Aorta (tissue), 5 donors: ENCODE measurements at regions of chr13 and their contacts with region 1.

Region 1: GRCh38 chr13:44969551-44970484 is 19.5 kb downstream of the NUFIP1 start:
- DNase-seq: no peak
- ATAC-seq: peak; percentile 73
- H3K4me3 ChIP-seq: no peak overlapping the region
- H3K27ac ChIP-seq: no peak overlapping the region
- H3K4me1 ChIP-seq: peaks cover 0 to 2% of the 10 kb centered on the region in 2 donors
- H3K27me3 ChIP-seq: no peaks in the 10 kb centered on the region

Region 2: DNA sequence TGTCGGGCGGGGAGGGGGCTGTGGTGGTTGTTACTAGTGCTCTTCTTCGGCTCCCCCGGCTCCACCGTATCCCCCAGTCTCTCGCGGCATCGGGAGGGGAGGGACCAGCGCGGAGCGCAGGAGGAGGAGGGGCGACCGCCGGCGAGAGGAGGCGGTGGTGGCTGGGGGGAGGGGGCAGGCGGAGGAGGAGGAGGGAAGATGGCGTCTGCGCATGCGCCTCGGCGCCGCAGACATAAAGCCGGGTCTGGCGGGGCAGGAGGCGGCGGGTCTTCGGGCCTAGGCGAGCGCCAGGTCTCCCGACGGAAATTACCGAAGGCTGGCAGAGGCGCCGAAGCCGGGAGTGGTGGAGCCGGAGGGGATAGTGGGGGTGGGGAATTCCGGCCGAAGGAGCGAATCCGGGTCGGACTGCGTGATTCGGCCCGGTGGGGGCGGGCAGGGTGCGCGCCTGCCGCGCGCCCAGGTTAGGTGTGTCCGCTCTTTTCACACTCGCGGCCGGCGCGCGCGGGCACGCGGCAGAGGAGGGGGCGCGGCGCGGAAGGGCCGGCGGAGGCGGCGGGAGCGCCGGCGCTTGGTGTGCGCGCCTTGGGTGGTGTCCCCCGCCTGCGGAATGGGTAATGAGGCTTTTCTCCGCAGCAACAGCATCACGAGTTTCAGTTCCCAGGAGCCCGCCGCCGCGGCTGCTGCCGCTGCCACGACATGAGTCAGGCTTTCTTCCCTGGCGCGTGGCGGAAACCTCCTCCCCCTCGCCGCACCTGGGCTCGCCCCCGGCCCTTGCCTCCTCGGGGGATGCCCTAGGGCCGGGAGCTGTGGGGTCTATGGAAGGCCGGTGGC is 392.4 kb before region 1 on chr13:
- intact Hi-C with region 1: loop called in 1 of 2 experiments (anchors 5 kb)
- DNase-seq: peak; percentile 98 to 99
- ATAC-seq: peak; percentile 94
- H3K4me3 ChIP-seq: peak overlapping the region; percentile 95 to 97
- H3K27ac ChIP-seq: peak overlapping the region; percentile 95 to 96
- H3K4me1 ChIP-seq: peaks cover 3% of the 10 kb centered on the region in 2 donors
- H3K27me3 ChIP-seq: no peaks in the 10 kb centered on the region

Region 3: DNA sequence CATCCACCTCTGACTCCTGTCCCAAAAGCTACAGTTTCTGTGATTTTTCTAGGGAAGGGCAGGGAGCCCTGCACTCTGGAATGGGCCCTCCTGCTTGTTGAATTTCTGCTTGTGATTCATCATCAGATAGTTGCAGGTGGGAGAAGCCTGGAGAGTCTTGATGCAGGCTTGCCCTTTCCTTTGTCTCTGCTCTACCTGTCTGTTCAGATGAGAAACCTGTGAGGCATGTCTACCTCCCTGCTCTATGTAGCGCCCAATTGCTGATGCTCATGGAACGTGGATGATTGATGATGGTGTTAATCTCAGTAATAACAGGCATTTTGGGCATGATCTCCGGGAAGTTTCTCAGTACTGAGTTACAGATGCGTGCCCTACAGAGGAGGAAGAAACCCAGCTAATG is 721.4 kb after region 1 on chr13:
- intact Hi-C with region 1: no loop called
- DNase-seq: no peak
- ATAC-seq: no peak
- H3K4me3 ChIP-seq: no peak overlapping the region
- H3K27ac ChIP-seq: no peak overlapping the region
- H3K4me1 ChIP-seq: no peaks in the 10 kb centered on the region
- H3K27me3 ChIP-seq: peaks cover 0 to 5% of the 10 kb centered on the region in 2 donors